Calu3 (cell line): ENCODE measurements at regions of chr2 and their contacts with region 1.

Region 1: DNA sequence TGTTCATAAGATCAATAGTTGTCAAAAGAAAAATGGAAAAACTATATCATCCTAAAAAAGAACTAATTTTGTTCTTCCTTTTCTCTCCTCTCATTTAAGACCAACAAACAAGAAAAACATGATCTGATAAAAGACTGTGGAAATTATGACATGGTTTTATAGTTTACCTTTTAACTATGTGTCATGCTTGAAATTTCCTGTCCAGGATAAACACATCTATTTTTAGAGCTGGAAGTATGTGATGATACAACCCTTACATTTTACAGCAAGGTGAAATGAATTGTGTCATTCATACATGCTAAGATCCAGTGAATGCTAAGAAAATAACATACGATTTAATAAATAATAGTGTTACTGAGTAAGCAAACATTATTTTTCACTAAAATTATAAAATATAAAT is 89.9 kb downstream of the GULP1 start:
- DNase-seq: no peak
- H3K4me3 Mint-ChIP-seq: peak overlapping the region; percentile 60
- H3K27ac Mint-ChIP-seq: peak overlapping the region; percentile 87
- H3K4me1 Mint-ChIP-seq: peaks cover 46% of the 10 kb centered on the region
- H3K27me3 Mint-ChIP-seq: no peaks in the 10 kb centered on the region
- CTCF ChIP-seq: no peak

Region 2: GRCh38 chr2:187689383-187689782 is 692.2 kb before region 1 on chr2:
- CTCF ChIA-PET with region 1: no interaction called
- intact Hi-C with region 1: loop called (anchors 2 kb)
- DNase-seq: no peak
- H3K4me3 Mint-ChIP-seq: no peak overlapping the region
- H3K27ac Mint-ChIP-seq: no peak overlapping the region
- H3K4me1 Mint-ChIP-seq: peaks cover 26% of the 10 kb centered on the region
- H3K27me3 Mint-ChIP-seq: no peaks in the 10 kb centered on the region
- CTCF ChIP-seq: no peak

Region 3: DNA sequence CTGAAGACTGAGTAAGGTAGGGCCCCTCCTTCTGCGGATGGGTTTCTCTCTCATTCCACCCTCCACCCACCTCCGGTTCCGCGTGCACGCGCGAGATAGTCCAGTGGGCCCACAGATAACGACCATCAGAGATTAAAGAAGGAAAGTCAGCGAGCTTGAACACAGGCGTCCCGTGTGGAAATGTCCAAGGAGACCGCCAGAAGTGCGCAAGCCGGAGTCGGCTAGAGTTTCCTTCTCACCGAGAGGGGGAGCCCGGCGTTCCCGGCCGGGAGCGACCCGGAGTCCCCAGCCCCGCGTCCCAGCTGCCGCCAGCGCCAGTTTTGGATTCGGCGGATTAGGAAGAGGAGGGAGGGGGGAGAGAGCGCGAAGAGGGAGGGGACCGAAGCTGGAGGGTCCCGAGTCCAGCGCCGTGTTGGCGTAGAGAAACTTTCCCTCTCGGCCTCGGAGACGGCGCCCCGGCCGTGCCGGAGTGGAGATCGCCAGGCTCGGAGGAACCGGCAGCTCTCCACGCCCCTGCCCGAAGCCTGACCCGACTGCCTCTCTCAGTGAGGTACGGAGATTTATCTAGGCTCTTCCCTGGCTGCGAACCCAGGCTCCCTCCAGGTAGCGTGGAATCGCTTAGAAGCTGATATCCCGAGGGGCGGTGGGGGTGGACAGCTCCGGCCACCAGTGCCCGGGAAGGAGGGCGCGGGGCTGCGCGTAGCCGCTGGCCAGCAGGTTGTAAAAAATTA is 89.8 kb before region 1 on chr2 and contains the start of gene GULP1:
- CTCF ChIA-PET with region 1: interaction called, 5 read pairs
- intact Hi-C with region 1: loop called (anchors 2 kb)
- DNase-seq: peak; percentile 82
- H3K4me3 Mint-ChIP-seq: peak within 1 kb of the TSS; percentile 95
- H3K27ac Mint-ChIP-seq: peak within 1 kb of the TSS; percentile 96
- H3K4me1 Mint-ChIP-seq: peaks cover 15% of the 10 kb centered on the region
- H3K27me3 Mint-ChIP-seq: no peaks in the 10 kb centered on the region
- CTCF ChIP-seq: peak; percentile 73
- total RNA-seq, gene GULP1: 86.8 and 94.4 TPM in 2 replicates

Region 4: DNA sequence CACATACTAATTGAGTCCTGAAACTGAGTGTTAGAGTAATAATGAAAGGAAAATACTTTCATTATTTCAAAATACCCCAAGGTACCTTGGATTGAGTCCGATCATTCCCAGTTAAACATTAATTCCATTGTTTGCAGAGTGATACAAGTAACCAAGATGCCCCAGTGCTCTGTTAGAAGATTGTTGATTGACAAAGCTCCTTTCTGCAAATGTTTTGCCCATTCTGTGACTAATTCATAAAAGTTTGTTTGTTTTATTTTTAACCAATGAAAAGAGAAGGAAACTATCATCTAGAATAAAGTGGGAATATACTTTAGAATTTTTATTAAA is 34.1 kb after region 1 on chr2:
- CTCF ChIA-PET with region 1: no interaction called
- intact Hi-C with region 1: loop called (anchors 5 kb)
- DNase-seq: no peak
- H3K4me3 Mint-ChIP-seq: peak overlapping the region; percentile 36
- H3K27ac Mint-ChIP-seq: peak overlapping the region; percentile 59
- H3K4me1 Mint-ChIP-seq: peaks cover 33% of the 10 kb centered on the region
- H3K27me3 Mint-ChIP-seq: no peaks in the 10 kb centered on the region
- CTCF ChIP-seq: no peak